AG04449 (cell line): ENCODE measurements at regions of chr13 and their contacts with region 1.

Region 1: GRCh38 chr13:113959198-113959597 is 14.7 kb downstream of the C13orf46 start:
- DNase-seq: no peak
- H3K4me3 ChIP-seq: no peak overlapping the region
- CTCF ChIP-seq: no peak

Region 2: DNA sequence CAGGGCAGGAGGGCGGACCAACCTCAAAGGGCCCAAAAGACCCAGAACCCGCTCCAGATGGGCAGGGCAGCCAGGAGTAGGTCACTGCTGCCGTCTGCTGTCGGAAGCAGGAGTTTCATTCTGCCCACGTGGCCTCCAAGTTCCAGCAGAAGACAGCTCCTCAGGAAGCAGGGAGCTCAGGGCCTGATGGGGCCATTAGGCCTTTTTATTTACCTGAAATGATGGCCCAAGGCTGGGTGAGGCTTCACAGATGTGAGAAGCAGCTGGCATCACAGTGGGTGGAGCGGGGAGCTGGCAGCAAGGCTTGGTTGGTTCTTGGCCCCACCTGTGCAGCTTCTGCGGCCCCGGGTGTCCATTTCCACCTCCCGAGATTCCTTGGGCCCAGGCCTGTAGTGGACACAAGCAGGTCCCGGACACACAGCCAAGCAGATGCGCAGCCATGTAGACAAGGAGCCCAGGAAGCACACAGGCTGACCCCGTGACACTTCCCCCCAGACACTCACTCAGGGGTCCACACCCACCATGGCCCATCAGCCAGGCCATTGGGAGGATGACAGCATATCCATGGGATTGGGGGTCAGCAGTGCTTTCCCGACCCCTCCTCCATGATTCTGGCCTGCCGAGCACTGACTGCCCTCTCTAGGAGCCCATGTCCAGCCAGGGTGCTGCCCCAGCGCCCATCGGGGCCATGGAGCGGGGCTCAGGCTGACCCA is 11.7 kb before region 1 on chr13:
- CTCF ChIA-PET with region 1: interaction called, 11 read pairs
- POLR2A ChIA-PET with region 1: no interaction called
- DNase-seq: no peak
- H3K4me3 ChIP-seq: no peak overlapping the region
- CTCF ChIP-seq: peak; percentile 83

Region 3: DNA sequence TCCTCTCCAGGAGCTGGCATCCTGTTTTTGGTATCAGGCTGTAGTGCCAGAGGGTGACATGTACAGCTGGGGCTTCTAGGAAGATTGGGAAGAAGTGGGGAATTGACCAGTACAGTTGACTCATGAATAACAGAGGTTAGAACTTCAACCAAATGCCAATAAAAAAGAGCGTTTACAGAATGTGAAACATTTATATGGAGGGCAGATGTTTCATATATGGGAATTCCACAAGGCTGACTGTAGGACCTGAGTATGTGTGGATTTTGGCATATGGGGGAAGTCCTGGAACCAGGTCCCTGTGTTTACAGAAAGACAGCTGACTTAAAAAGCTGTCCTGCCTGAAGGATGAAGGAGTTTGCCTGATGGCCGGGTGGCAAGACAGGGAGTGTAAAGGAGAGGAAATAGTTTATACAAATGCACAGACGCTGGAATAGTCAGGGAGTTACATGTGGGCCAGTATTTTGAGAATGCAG is 360.3 kb after region 1 on chr13:
- CTCF ChIA-PET with region 1: no interaction called
- POLR2A ChIA-PET with region 1: no interaction called
- DNase-seq: peak; percentile 73
- H3K4me3 ChIP-seq: no peak overlapping the region
- CTCF ChIP-seq: no peak

Region 4: DNA sequence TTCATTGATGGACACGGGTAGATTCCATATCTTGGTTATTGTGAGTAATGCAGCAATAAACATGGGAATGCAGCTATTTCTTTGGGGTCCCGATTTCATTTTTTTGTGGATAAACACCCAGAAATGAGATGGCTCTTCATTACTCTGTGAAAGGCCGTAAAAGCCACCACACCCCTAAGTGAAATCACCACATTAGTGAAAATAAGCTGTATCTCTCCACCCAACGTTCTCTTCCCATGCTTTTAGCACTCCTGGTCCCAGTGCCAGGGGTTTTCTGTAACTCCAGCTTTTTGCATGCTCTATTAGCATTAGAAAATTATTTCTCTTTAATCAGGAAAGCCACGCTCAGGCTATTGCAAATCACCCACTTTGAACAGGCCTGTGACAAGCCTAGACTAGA is 370.9 kb after region 1 on chr13:
- CTCF ChIA-PET with region 1: no interaction called
- POLR2A ChIA-PET with region 1: no interaction called
- DNase-seq: no peak
- H3K4me3 ChIP-seq: no peak overlapping the region
- CTCF ChIP-seq: no peak